Activated CD8-positive, alpha-beta memory T cell treated with anti-CD3 and anti-CD28 coated beads, Interleukin-2, amount 10 ng/mL, durations not matched to agents 7 days and 5 days (primary cell): ENCODE measurements at regions of chr14 and their contacts with region 1.

Region 1: GRCh38 chr14:72476657-72477499 is 417.0 kb downstream of the DPF3 start:
- DNase-seq: peak; percentile 96
- ATAC-seq: peak; percentile 88
- H3K4me3 Mint-ChIP-seq: peak overlapping the region; percentile 51
- H3K27ac Mint-ChIP-seq: peak overlapping the region; percentile 94
- H3K4me1 Mint-ChIP-seq: peaks cover 78% of the 10 kb centered on the region
- H3K27me3 Mint-ChIP-seq: no peaks in the 10 kb centered on the region

Region 2: DNA sequence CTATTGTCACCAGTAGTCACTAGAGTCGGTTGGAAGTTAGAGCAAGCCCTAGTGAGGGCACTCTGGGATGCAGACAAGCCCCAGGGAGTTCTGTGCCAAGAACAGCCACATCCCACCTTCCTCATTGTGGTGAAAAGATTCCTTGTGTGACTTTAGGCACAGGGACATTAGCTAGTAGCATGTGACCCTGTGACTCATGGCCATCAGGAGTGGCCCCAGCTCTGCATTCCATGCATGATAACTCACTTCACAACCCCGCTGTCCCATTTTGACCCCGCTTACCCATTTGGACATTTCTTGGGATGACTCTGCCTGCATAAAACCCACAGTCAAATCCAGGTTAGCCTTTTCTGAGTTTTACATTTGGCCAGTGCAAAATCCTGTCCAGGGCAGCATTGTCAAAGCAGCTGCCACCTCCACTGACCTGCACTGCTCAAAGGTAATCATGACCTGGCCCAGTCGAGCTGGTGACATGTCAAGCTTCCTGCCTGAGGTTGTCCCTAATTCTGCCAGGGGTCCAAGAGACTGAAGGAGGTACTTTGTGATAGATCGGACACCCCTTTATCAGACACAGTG is 13.5 kb before region 1 on chr14:
- CTCF ChIA-PET with region 1: interaction called, 22 read pairs
- DNase-seq: no peak
- ATAC-seq: no peak
- H3K4me3 Mint-ChIP-seq: no peak overlapping the region
- H3K27ac Mint-ChIP-seq: no peak overlapping the region
- H3K4me1 Mint-ChIP-seq: no peaks in the 10 kb centered on the region
- H3K27me3 Mint-ChIP-seq: peaks cover 3% of the 10 kb centered on the region